PC-9 (cell line): ENCODE measurements at regions of chr19 and their contacts with region 1.

Region 1: DNA sequence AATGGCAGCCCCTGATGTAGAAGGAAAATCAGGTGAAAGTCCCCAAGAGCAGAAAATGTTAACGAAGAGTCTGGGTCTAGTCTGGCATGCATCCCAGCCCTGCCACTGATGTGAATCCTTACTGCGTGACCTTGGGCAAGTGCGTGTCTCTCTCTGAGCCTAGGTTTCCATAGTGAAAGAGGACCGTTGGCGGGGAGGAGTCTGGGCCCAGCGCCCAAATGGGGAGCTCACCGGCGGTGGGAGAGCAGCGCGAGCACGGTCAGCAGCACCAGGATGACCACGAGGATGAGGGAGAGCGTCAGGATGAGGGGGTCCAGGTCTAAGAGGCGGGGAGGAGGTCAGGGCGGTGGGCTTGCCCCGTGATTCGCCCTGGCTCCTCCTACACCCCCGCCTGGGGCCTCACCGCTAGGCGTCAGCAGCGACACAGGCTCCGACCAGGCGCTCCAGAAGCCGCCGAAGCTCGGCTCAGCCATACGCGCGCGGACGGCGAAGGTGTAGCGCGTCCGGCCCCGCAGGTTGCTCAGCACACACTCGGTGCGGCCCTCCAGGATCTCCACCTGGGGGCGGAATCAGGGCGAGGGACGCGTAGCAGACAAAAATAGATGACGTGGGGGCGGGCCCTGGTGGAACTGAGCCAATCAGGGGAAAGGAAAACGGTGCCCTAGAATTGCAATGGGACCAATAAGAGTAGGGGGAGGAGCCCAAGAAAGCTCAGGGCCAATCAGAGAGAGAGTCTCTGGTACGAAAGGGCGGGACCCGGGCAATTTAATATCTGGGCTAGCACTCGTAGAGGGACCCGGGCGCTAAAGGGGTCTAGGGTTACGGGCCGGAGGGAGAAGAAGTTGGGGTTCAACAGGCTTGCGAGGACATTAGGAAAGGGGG is 3.2 kb downstream of the EPOR start:
- DNase-seq: peak; percentile 85 to 91
- H3K4me3 ChIP-seq: peak overlapping the region; percentile 38; the same call in 1 of the 2 replicates
- H3K27ac ChIP-seq: no peak overlapping the region
- H3K4me1 ChIP-seq: peaks cover 66% of the 10 kb centered on the region
- H3K27me3 ChIP-seq: no peaks in the 10 kb centered on the region
- CTCF ChIP-seq: peak; percentile 70

Region 2: DNA sequence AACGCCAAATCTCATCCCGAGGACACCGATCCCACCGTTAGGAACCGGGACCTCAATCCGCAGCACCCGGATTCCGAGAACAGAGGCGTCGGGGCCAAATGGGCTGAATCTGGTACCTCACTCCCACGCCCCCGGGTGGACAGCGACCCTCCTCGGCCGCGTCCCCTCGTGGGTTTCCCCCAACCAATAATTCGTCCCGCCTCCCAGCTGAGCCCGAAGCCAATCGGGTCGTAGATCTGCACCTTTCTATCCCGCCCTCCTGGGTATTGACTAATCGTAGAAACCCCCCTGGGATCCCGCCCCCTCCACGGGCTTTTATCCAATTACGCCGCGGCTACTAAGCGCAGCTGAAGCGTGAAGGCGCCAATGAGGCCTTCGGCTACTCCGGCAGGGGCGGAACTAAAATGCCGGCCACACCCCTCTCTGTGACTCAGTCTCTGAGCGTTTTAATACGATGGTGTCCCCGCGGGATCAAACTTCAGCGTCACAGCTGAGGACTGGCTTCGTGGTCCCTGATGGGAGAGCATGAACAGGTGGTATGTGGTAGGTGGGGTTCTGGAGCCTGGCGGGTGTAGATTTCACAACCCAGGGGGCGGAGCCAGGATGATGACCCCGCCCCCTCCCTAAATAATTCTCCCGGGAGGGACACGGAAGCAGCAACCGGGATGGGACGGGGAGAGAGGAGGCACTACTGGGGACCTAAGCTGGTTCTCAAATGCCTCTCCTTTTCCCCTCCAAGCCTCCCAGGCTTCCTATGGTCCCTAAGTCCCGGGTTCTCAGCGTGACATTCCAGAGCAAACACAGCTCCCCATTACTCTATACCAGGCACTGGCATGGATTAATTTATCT is 34.6 kb before region 1 on chr19 and contains the starts of genes CCDC159 and TMEM205:
- CTCF ChIA-PET with region 1: interaction called, 6 read pairs
- POLR2A ChIA-PET with region 1: interaction called, 6 read pairs
- intact Hi-C with region 1: loop called (anchors 1 kb)
- DNase-seq: peak; percentile 98 to 99
- H3K4me3 ChIP-seq: peak within 1 kb of the TSS; percentile 90
- H3K27ac ChIP-seq: peak within 1 kb of the TSS; percentile 67
- H3K4me1 ChIP-seq: peaks cover 36% of the 10 kb centered on the region
- H3K27me3 ChIP-seq: no peaks in the 10 kb centered on the region
- CTCF ChIP-seq: no peak
- total RNA-seq, gene CCDC159: 9.4 and 13.7 TPM in 2 replicates
- total RNA-seq, gene TMEM205: 80.3 and 90.6 TPM in 2 replicates

Region 3: GRCh38 chr19:11405846-11406643 is 25.2 kb after region 1 on chr19:
- CTCF ChIA-PET with region 1: interaction called, 10 read pairs
- POLR2A ChIA-PET with region 1: no interaction called
- intact Hi-C with region 1: no loop called
- DNase-seq: no peak
- H3K4me3 ChIP-seq: no peak overlapping the region
- H3K27ac ChIP-seq: no peak overlapping the region
- H3K4me1 ChIP-seq: no peaks in the 10 kb centered on the region
- H3K27me3 ChIP-seq: no peaks in the 10 kb centered on the region
- CTCF ChIP-seq: no peak

Region 4: GRCh38 chr19:11482384-11483050 is 101.6 kb after region 1 on chr19:
- CTCF ChIA-PET with region 1: interaction called, 3 read pairs
- POLR2A ChIA-PET with region 1: interaction called, 3 read pairs
- intact Hi-C with region 1: loop called (anchors 5 kb)
- DNase-seq: peak; percentile 47 to 73
- H3K4me3 ChIP-seq: no peak overlapping the region
- H3K27ac ChIP-seq: no peak overlapping the region
- H3K4me1 ChIP-seq: no peaks in the 10 kb centered on the region
- H3K27me3 ChIP-seq: no peaks in the 10 kb centered on the region
- CTCF ChIP-seq: peak; percentile 95

Region 5: GRCh38 chr19:11587302-11587974 is 206.5 kb after region 1 on chr19:
- CTCF ChIA-PET with region 1: interaction called, 14 read pairs
- POLR2A ChIA-PET with region 1: no interaction called
- intact Hi-C with region 1: no loop called
- DNase-seq: peak in 1 of 2 experiments; percentile 76
- H3K4me3 ChIP-seq: no peak overlapping the region
- H3K27ac ChIP-seq: no peak overlapping the region
- H3K4me1 ChIP-seq: 0 out of 2 replicates have a peak, but pooled peaks cover 4% of the 10 kb centered on the region
- H3K27me3 ChIP-seq: no peaks in the 10 kb centered on the region
- CTCF ChIP-seq: peak; percentile 93